Activated naive CD4-positive, alpha-beta T cell treated with anti-CD3 and anti-CD28 coated beads for 36 hours (primary cell): ENCODE measurements at regions of chr9 and their contacts with region 1.

Region 1: GRCh38 chr9:89549031-89549644 is 51.2 kb upstream of the SEMA4D start:
- DNase-seq: peak; percentile 94
- H3K4me3 Mint-ChIP-seq: no peak overlapping the region
- H3K27ac Mint-ChIP-seq: peak overlapping the region; percentile 74
- H3K4me1 Mint-ChIP-seq: peaks cover 18% of the 10 kb centered on the region
- H3K27me3 Mint-ChIP-seq: no peaks in the 10 kb centered on the region

Region 2: DNA sequence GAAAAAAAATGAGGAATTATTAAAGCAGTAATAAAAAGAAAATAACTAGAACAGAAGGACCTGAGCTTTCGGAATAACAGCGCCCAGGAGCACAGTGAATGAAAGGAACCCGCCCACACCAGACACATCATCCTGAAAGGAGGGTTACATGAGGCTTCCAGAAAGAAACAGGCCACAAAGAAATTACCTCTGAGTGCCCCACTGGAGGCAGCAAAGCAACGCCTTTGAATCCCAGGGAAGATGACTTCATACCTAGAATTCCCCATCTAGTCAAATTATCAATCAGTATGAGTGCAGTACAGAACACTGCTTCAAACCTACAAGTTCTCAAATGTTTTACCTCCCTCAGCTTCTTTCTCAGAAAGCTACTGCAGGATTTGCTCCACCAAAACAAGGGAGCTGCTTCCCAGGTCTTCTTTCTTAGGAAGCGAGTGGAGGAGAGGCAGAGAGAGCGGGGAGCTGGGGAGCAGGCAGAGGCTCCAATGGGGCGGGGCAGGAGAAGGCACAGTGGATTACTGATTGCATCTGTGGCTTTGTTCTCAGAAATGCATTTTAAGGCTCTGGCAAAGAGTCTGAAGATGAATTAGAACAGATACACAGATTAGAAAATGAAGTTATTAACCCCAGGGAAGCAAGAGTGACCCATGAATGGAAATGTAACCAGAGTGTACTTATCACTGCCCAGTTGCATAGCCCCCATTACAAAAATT is 138.3 kb before region 1 on chr9:
- CTCF ChIA-PET with region 1: interaction called, 84 read pairs
- intact Hi-C with region 1: loop called (anchors 1 kb)
- DNase-seq: peak; percentile 85
- H3K4me3 Mint-ChIP-seq: peak overlapping the region; percentile 39
- H3K27ac Mint-ChIP-seq: peak overlapping the region; percentile 89
- H3K4me1 Mint-ChIP-seq: peaks cover 86% of the 10 kb centered on the region
- H3K27me3 Mint-ChIP-seq: no peaks in the 10 kb centered on the region

Region 3: DNA sequence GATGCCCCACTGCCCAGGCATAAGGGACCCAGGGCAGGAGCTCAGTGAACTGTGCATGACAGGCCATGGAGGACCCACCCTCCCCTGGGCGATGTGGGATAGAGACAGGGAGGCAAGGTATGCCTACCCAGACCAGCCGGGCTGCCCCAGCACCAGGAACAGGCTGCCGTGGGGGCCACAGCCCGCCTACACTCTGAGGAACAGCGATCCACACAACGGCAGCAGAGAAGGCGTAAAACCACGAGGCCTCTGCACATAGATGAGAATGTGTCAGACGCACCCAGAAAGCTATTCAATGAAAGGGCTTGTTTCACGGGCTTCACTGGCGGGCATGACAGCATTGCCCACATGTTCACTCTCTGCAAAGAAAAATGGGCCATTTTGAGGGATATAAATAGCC is 100.8 kb before region 1 on chr9:
- CTCF ChIA-PET with region 1: interaction called, 20 read pairs
- intact Hi-C with region 1: no loop called
- DNase-seq: peak; percentile 66
- H3K4me3 Mint-ChIP-seq: no peak overlapping the region
- H3K27ac Mint-ChIP-seq: peak overlapping the region; percentile 85
- H3K4me1 Mint-ChIP-seq: peaks cover 92% of the 10 kb centered on the region
- H3K27me3 Mint-ChIP-seq: no peaks in the 10 kb centered on the region

Region 4: GRCh38 chr9:89466451-89467277 is 82.5 kb before region 1 on chr9:
- CTCF ChIA-PET with region 1: interaction called, 14 read pairs
- intact Hi-C with region 1: loop called (anchors 1 kb)
- DNase-seq: peak; percentile 86
- H3K4me3 Mint-ChIP-seq: peak overlapping the region; percentile 38
- H3K27ac Mint-ChIP-seq: peak overlapping the region; percentile 97
- H3K4me1 Mint-ChIP-seq: peaks cover 96% of the 10 kb centered on the region
- H3K27me3 Mint-ChIP-seq: no peaks in the 10 kb centered on the region

Region 5: DNA sequence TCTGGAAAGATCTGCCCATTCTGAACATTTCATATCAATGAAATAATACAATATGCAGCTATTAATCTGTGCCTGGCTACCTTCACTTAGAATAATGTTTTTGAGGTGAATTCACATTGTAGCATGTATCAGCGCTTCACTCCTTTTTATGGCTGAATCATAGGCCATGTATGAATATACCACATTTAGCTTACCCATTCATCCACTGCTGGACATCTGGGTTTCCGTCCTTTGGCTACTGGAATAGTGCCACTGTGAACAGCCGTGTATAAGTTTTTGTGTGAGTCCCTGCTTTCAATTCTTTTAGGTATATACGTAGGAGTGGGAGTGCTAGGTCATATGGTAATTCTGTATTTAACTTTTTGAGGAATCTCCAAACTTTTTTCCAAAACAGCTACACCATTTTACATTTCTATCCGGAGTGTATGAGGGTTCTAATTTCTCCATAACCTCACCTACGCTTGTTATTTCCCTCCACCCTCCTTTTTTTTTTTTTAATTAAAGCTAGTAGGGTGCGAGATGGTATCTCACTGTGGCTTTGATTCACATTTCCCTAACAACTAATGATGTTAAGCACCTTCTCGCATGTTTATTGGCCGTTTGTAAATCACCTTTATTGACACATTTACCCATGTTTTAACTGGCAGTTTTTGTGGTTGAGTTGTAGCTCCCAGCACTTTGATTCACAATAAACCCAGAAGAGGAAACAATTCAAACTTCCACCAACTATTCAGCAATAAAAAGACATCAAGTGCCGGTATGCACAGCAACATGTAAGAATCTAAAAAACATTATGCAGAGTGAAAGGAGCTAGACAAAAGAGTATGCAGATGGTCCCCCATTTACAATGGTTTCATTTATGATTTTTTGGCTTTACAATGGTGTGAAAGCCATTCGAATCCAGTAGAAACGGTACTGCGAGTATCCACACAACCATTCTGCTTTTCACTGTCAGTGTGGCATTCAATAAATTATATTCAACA is 59.3 kb before region 1 on chr9:
- CTCF ChIA-PET with region 1: interaction called, 10 read pairs
- intact Hi-C with region 1: loop called (anchors 2 kb)
- DNase-seq: no peak
- H3K4me3 Mint-ChIP-seq: peak overlapping the region; percentile 31
- H3K27ac Mint-ChIP-seq: peak overlapping the region; percentile 83
- H3K4me1 Mint-ChIP-seq: peaks cover 94% of the 10 kb centered on the region
- H3K27me3 Mint-ChIP-seq: no peaks in the 10 kb centered on the region

Region 6: GRCh38 chr9:89522261-89522958 is 26.7 kb before region 1 on chr9:
- CTCF ChIA-PET with region 1: interaction called, 15 read pairs
- intact Hi-C with region 1: loop called (anchors 1 kb)
- DNase-seq: peak; percentile 89
- H3K4me3 Mint-ChIP-seq: peak overlapping the region; percentile 58
- H3K27ac Mint-ChIP-seq: peak overlapping the region; percentile 96
- H3K4me1 Mint-ChIP-seq: peaks cover 93% of the 10 kb centered on the region
- H3K27me3 Mint-ChIP-seq: no peaks in the 10 kb centered on the region

Region 7: GRCh38 chr9:89604729-89605464 is 55.8 kb after region 1 on chr9 and contains the start of gene GADD45G:
- CTCF ChIA-PET with region 1: no interaction called
- intact Hi-C with region 1: no loop called
- DNase-seq: peak; percentile 88
- H3K4me3 Mint-ChIP-seq: peak within 1 kb of the TSS; percentile 84
- H3K27ac Mint-ChIP-seq: no peak within 1 kb of the TSS
- H3K4me1 Mint-ChIP-seq: peaks cover 34% of the 10 kb centered on the region
- H3K27me3 Mint-ChIP-seq: peaks cover 3% of the 10 kb centered on the region
- total RNA-seq, gene GADD45G: 0.72 to 1.2 TPM